Spleen (tissue), 13 donors: ENCODE measurements at regions of chr15 and their contacts with region 1.

Region 1: GRCh38 chr15:72599855-72600464 is 54.5 kb upstream of the GOLGA6B start:
- DNase-seq: no peak
- H3K4me3 ChIP-seq: no peak overlapping the region
- H3K27ac ChIP-seq: no peak overlapping the region
- H3K4me1 ChIP-seq: no peaks in the 10 kb centered on the region
- H3K27me3 ChIP-seq: no peaks in the 10 kb centered on the region
- CTCF ChIP-seq: peak in 8 of 11 experiments; percentile 29 to 69 (median 49)
- POLR2A ChIP-seq: no peak

Region 2: GRCh38 chr15:72473614-72474465 is 126.1 kb before region 1 on chr15 and contains the start of gene ARIH1:
- intact Hi-C with region 1: no loop called
- DNase-seq: peak; percentile 98
- H3K4me3 ChIP-seq: peak within 1 kb of the TSS; percentile 59 to 91 (median 74)
- H3K27ac ChIP-seq: peak within 1 kb of the TSS; percentile 98 to 100 (median 100)
- H3K4me1 ChIP-seq: peaks cover 37 to 55% (median 48%) of the 10 kb centered on the region in 6 donors
- H3K27me3 ChIP-seq: no peaks in the 10 kb centered on the region
- CTCF ChIP-seq: peak in 7 of 11 experiments; percentile 3 to 50 (median 35)
- POLR2A ChIP-seq: peak; percentile 93 to 98 (median 95)
- total RNA-seq, gene ARIH1: 46.2 to 171 (median 147) TPM

Region 3: DNA sequence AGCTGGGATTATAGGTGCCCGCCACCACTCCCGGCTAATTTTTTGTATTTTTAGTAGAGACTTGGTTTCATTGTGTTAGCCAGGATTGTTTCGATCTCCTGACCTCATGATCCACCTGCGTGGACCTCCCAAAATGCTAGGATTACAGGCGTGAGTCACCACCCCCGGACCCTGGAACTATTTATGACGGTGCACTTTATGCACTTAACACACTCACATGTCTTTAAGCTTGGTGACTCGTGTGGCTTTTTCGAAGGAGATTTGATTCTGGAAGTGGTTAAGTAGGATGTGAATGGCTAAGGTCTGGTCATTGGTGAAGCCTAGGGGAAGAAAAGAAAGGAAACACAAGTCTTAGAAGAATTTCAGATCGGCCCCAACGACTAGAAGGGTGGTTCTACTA is 106.3 kb after region 1 on chr15:
- intact Hi-C with region 1: loop called (anchors 10 kb)
- DNase-seq: no peak
- H3K4me3 ChIP-seq: no peak overlapping the region
- H3K27ac ChIP-seq: no peak overlapping the region
- H3K4me1 ChIP-seq: no peaks in the 10 kb centered on the region
- H3K27me3 ChIP-seq: no peaks in the 10 kb centered on the region
- CTCF ChIP-seq: no peak
- POLR2A ChIP-seq: no peak

Region 4: DNA sequence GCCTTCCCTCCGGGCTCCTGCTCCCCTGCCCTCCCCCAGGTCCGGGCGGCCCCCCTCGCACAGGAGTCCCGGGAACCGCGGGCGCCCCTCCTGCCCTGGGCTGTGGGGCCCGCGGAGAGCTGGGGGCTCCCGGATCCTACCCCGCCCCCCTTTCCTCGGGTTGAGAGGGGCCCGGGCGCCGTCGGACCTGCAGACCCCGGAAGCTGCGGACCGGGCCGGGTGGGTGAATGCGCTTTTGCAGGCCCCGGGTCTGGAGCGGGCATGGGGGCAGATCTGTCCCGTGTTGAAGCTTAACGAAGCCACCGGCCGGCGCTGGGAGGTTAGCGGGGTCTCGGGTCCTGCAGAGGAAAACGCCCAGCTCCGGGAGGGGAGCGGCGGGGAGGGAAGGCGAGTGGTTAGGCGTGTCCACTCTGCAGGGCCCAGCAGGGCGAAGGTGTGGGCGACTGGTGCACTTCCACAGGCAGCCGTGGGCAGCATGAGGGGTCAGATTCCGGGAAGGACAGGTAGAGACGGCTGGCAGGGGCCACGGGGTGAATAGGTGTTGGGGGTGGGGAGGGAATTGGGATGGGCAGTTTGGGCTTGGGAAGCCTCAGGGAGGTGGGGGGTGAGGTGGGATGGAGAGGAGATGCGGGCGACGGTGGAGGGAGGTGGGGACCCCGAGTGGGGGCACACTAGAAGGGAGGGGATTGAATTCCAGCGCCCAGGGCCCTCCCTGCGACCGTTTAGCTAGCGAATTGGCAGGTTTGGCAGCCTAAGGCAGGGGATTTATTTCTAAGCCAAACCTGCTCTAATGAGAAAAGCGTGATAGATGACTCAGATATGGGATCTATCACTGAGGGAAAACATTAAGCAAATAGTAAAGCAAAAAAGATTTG is 1084.9 kb after region 1 on chr15:
- intact Hi-C with region 1: no loop called
- DNase-seq: no peak
- H3K4me3 ChIP-seq: peak overlapping the region; percentile 47 to 76 (median 62)
- H3K27ac ChIP-seq: peak overlapping the region; percentile 20 to 79 (median 64)
- H3K4me1 ChIP-seq: peaks cover 4 to 64% (median 45%) of the 10 kb centered on the region in 6 donors
- H3K27me3 ChIP-seq: peaks cover 0 to 71% (median 13%) of the 10 kb centered on the region in 7 donors
- CTCF ChIP-seq: no peak
- POLR2A ChIP-seq: no peak